ENCODE measurements at regions of chr10 and their contacts with region 1.

Region 1: DNA sequence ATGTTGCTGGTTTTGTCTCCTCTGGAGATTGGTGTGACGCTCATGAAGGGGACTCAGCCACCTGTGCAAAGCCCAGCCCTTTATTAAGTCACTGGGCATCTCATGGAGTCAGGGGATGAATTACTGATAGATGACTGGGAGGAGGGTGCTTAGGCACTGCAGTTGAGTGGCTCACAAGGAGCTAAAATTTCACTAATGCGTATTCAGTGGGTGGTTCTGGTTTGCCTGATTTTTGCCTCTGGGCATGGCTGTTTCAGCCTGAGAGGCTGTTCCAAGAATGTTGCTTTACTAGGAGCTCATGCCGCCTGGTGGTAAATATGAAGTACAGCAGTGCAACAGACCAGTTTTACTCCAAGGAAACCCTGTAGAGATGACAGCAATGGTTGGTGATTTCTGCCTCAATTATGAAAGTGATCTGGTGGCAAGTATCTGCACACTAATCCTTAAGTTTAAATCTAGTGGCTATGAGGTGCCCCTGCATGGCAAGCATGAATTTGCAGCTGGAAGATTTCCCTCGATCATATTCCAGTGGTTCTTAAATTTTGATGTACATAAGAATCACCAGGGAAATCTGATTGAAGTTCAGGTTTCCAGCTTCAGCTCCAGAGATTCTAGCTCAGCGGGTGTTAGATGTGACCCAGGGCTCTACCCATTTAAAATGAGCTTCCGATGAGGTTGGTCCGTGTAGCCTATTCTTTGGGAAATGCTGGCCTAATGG is 19.9 kb downstream of the ACTA2 start:
- DNase-seq: peak in 5 of 10 donors; percentile 30 to 89 (median 39)

Region 2: GRCh38 chr10:88835096-88835909 is 97.4 kb before region 1 on chr10:
- intact Hi-C with region 1: loop called (anchors 1 kb)
- DNase-seq: peak; percentile 71 to 97 (median 86)

Region 3: GRCh38 chr10:88989824-88990383 is 57.2 kb after region 1 on chr10:
- intact Hi-C with region 1: loop called (anchors 1 kb)
- DNase-seq: no peak

Region 4: DNA sequence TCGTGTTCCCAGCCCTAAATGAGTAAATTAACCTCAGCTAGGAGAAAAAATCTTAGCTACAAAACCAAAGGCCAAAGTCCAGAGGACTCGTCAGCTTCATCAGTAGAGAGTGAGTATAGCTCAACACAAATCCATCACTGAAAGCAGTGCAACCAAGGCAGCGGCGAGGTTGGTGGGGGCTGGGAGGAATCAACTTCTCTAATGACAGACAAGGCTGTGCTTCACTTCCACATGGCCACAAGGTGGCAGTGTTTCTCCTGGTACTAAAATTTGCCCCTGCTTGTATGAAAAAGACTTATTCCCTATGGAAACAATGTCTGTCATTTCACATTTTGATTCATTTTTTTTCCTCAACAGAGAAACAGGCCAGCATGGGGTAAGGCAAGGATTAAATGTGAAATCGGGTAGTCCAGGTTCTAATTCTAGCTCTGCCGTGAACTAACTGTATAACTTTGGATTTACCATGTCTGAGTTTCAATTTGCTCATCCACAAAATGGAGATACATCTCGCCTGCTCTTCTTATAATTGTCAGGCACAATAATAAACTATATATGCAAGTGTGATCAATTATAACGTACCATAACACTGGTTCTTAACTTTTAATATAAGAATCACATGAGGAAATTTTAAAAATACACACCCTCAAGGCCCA is 97.2 kb after region 1 on chr10:
- intact Hi-C with region 1: loop called (anchors 2 kb)
- DNase-seq: peak; percentile 26 to 96 (median 79)

Region 5: GRCh38 chr10:89217057-89217990 is 284.6 kb after region 1 on chr10:
- intact Hi-C with region 1: loop called (anchors 2 kb)
- DNase-seq: peak in 6 of 10 donors; percentile 57 to 88 (median 66)

Measured in posterior cingulate gyrus (tissue), 11 donors.